Heart right ventricle (tissue), 16 donors: ENCODE measurements at regions of chr9 and their contacts with region 1.

Region 1: DNA sequence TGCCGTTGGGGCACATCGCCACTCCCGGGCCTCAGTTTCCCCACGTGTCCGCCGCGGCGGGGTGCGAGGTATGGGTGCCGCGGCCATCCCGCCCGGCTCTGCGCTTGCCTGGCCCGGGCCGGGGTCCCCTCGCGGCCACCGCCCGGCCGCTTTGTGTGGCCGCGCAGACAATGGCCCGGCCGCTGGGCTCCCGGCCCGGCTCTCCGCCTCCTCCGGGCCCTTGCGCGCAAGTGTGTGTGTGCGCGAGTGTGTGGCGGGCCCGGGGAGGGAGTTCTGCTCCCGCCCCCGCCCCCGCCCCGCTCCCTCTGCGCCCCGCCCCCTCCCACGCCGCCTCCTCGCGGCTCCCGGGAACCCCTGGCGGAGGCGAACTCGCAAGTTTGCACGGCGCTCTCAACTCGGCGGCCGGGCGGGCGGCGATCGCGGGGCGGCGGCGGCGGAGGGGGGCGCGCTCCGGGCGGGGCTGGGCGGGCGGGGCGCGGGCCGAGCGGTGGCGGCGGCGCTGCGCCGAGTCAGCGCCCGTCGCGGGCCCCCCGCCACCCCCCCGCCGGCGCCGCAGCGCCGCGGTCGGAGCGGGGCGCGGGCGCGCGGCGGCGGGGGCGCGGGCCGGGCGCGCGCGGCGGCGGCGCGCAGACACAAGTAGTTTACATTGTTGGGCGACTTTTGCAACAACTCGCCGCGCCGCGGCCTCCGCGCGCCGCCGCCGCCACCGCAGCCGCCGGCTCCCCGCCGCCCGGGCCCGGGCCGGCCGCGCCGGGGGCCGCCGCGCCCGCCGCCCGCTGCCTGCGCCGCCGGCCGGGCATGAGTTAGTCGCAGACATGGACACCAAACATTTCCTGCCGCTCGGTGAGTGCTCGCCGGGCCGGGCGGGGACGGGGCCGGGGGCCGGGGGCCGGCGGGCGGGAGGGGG is at the start of gene RXRA:
- DNase-seq: peak; percentile 86 to 89
- ATAC-seq: peak; percentile 54 to 74 (median 64)
- H3K4me3 ChIP-seq: peak within 1 kb of the TSS; percentile 70 to 96 (median 86)
- H3K27ac ChIP-seq: peak within 1 kb of the TSS; percentile 90 to 99 (median 98)
- H3K4me1 ChIP-seq: peaks cover 33 to 68% (median 58%) of the 10 kb centered on the region in 9 donors
- H3K27me3 ChIP-seq: no peaks in the 10 kb centered on the region
- CTCF ChIP-seq: peak in 5 of 9 donors; percentile 26 to 49 (median 43)
- total RNA-seq, gene RXRA: 38.4 to 92.3 (median 43.6) TPM

Region 2: GRCh38 chr9:134171316-134172197 is 154.5 kb before region 1 on chr9:
- intact Hi-C with region 1: loop called in 7 of 10 experiments (anchors 5 to 10 kb)
- DNase-seq: no peak
- ATAC-seq: peak in 4 of 8 donors; percentile 2 to 28 (median 10)
- H3K4me3 ChIP-seq: no peak overlapping the region
- H3K27ac ChIP-seq: peak overlapping the region in 6 of 10 donors; percentile 31 to 62 (median 48)
- H3K4me1 ChIP-seq: peaks cover 0 to 42% (median 18%) of the 10 kb centered on the region in 9 donors
- H3K27me3 ChIP-seq: peaks cover 0 to 23% (median 20%) of the 10 kb centered on the region in 7 donors
- CTCF ChIP-seq: no peak

Region 3: GRCh38 chr9:134253606-134254198 is 72.4 kb before region 1 on chr9:
- intact Hi-C with region 1: no loop called
- DNase-seq: no peak
- ATAC-seq: no peak
- H3K4me3 ChIP-seq: no peak overlapping the region
- H3K27ac ChIP-seq: no peak overlapping the region
- H3K4me1 ChIP-seq: peaks cover 0 to 7% (median 4%) of the 10 kb centered on the region in 9 donors
- H3K27me3 ChIP-seq: peaks cover 0 to 2% (median 0%) of the 10 kb centered on the region in 7 donors
- CTCF ChIP-seq: no peak

Region 4: DNA sequence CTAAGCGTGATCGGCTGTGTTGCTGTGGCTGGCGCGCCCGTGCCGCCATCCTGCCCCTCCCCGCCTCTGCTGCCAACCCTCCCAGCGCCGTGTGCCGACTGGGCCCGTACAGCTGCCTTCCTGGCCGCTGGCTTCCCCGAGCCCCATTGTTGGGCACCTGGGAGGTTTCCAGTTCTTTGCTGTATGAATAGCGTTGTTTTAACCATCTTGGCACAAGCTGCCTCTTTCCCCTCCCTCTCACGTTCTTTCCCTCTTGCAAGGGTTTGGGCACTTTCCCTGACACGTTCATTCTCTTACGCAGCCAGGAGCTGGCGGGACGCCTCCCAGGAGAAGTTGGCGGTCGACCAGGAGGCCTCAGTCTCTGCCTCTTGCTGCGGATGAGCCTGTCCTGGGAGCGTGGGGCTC is 43.0 kb before region 1 on chr9:
- intact Hi-C with region 1: loop called in 1 of 10 experiments (anchors 5 kb)
- DNase-seq: peak; percentile 40 to 82
- ATAC-seq: peak; percentile 53 to 83 (median 74)
- H3K4me3 ChIP-seq: no peak overlapping the region
- H3K27ac ChIP-seq: peak overlapping the region in 6 of 10 donors; percentile 36 to 81 (median 67)
- H3K4me1 ChIP-seq: peaks cover 6 to 22% (median 11%) of the 10 kb centered on the region in 9 donors
- H3K27me3 ChIP-seq: peaks cover 0 to 14% (median 0%) of the 10 kb centered on the region in 7 donors
- CTCF ChIP-seq: no peak

Region 5: DNA sequence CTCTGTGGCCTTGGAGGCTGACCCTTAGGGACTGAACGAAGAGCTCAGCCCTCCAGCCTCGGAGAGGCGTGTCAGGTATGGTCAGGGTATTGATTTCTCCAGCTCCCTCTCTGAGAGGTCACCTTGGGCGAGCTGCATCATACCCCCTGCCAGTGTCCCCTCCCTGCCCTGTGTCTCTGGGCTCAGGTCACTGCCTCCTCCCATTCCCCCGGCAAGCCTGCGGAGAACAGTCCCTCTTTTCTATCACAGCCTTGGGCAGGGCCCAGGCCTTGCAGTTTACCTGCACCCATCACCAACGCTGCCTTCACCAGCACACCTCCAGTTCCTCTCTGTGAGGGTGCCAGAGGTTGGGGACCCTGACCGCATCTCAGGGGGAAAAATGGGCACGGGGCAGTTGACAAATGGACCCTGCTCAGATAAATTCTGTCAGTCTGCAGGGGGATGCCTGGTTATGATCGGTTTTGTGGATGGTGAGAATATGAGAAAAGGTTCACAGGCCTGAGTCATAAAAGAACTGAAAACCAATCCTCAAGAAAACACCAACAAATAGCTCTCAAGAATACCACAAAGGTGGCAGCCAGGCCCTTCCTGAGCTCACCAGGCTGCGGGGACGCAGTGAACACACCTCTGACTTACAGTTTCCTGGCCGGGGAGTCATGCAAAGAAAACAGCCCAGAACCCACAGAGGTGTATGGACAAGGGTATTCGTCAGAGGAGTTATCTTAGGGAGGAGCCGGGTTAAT is 24.5 kb before region 1 on chr9:
- intact Hi-C with region 1: no loop called
- DNase-seq: peak in 1 of 2 donors; percentile 4
- ATAC-seq: no peak
- H3K4me3 ChIP-seq: no peak overlapping the region
- H3K27ac ChIP-seq: no peak overlapping the region
- H3K4me1 ChIP-seq: peaks cover 0 to 4% (median 0%) of the 10 kb centered on the region in 9 donors
- H3K27me3 ChIP-seq: no peaks in the 10 kb centered on the region
- CTCF ChIP-seq: no peak

Region 6: GRCh38 chr9:134359440-134360286 is 33.6 kb after region 1 on chr9:
- intact Hi-C with region 1: no loop called
- DNase-seq: no peak
- ATAC-seq: peak in 1 of 8 donors; percentile 1
- H3K4me3 ChIP-seq: peak overlapping the region in 1 of 10 donors; percentile 12
- H3K27ac ChIP-seq: peak overlapping the region in 5 of 10 donors; percentile 16 to 80 (median 55)
- H3K4me1 ChIP-seq: peaks cover 44 to 99% (median 90%) of the 10 kb centered on the region in 9 donors
- H3K27me3 ChIP-seq: no peaks in the 10 kb centered on the region
- CTCF ChIP-seq: no peak

Region 7: GRCh38 chr9:134407123-134407808 is 81.2 kb after region 1 on chr9:
- intact Hi-C with region 1: loop called in 3 of 10 experiments (anchors 5 to 10 kb)
- DNase-seq: peak; percentile 92 to 93
- ATAC-seq: peak; percentile 73 to 85 (median 76)
- H3K4me3 ChIP-seq: peak overlapping the region in 8 of 10 donors; percentile 11 to 49 (median 32)
- H3K27ac ChIP-seq: peak overlapping the region in 9 of 10 donors; percentile 80 to 92 (median 86)
- H3K4me1 ChIP-seq: peaks cover 80 to 100% (median 99%) of the 10 kb centered on the region in 9 donors
- H3K27me3 ChIP-seq: no peaks in the 10 kb centered on the region
- CTCF ChIP-seq: no peak

Region 8: DNA sequence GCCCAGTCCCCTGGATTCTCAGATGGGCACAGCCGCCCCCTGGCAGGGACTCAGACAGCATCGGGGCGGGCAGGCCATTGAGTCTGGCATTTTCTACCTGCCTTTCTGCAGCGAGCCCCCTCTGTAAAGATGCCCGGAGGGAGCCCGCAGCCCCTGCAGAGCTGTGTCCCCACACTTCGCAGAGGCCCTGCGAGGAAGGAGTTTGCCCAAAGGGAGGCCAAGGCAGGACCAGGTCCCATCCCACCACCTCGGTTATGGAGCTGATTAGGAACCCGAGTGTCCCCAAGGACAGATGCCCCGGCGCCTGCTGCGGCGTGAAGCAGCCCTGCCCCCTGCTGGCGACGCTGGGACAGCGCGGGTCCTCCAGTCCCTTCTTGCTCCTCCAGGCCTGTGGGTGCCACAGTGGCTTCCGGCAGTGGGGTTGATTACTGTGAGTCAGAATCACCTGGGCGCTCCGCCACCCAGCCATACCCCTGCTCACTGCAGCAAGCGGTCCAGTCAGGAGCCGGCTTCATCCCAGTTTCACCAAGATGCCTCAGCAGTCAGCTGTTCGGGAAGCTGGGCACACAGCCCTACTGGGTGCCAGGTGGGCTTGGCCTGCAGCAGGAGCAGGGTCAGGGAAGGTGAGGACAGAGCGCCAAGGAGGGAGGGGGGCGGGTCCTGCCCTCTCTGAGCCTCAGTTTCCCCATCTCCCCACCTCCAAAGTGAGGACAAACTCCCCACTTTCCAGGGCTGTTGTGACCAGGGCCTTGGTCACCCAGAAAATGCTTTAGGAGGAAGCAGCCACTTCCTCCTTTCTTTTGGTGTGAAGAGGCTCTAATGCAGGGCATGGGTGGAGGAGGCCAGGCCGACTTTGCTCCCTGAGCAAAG is 117.3 kb after region 1 on chr9:
- intact Hi-C with region 1: loop called in 7 of 10 experiments (anchors 2 to 10 kb)
- DNase-seq: peak; percentile 78 to 86
- ATAC-seq: peak; percentile 79 to 94 (median 86)
- H3K4me3 ChIP-seq: peak overlapping the region in 1 of 10 donors; percentile 5
- H3K27ac ChIP-seq: peak overlapping the region in 3 of 10 donors; percentile 12 to 76 (median 43)
- H3K4me1 ChIP-seq: peaks cover 25 to 50% (median 40%) of the 10 kb centered on the region in 9 donors
- H3K27me3 ChIP-seq: peaks cover 0 to 9% (median 0%) of the 10 kb centered on the region in 7 donors
- CTCF ChIP-seq: peak; percentile 97 to 100 (median 99)